ENCODE measurements at regions of chr4 and their contacts with region 1.

Region 1: GRCh38 chr4:174631901-174632758 is 109.8 kb upstream of the HPGD start:
- DNase-seq: peak in 2 of 7 donors; percentile 8 to 27
- H3K4me3 ChIP-seq: no peak overlapping the region
- H3K27ac ChIP-seq: no peak overlapping the region
- H3K4me1 ChIP-seq: no peaks in the 10 kb centered on the region
- H3K27me3 ChIP-seq: no peaks in the 10 kb centered on the region
- CTCF ChIP-seq: peak; percentile 42 to 82 (median 62)
- POLR2A ChIP-seq: no peak

Region 2: DNA sequence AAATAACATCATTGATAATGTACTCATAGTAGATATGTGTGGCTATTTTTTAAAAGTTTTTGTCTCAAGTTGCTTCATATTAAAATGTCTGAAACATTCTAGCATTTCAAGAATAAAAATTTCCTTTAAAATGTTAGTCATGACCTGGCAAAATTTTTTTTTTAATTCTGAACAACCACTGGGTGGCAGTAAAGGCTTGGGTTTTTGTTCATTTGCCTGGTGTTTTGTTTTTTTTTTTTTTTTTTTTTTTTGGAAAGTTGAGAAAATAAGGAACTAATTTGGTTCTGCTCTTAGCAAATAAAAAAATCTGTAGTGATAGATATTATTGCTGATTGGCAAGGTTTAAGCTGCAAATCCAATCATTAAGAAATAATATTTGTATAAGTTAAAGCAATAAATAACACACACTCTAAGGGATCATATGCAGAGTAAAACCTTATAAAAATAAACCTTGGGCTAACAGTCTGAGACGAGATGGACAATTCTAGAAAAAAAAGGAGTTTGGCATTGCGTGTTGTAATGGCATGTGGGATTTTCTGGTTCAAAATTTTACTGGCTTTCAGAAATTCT is 267.0 kb before region 1 on chr4:
- intact Hi-C with region 1: loop called (anchors 5 to 10 kb)
- DNase-seq: peak in 4 of 7 donors; percentile 22 to 37 (median 26)
- H3K4me3 ChIP-seq: no peak overlapping the region
- H3K27ac ChIP-seq: no peak overlapping the region
- H3K4me1 ChIP-seq: no peaks in the 10 kb centered on the region
- H3K27me3 ChIP-seq: no peaks in the 10 kb centered on the region
- CTCF ChIP-seq: peak; percentile 30 to 70 (median 54)
- POLR2A ChIP-seq: no peak

Region 3: GRCh38 chr4:174377613-174378012 is 254.5 kb before region 1 on chr4:
- intact Hi-C with region 1: loop called in 1 of 2 experiments (anchors 10 kb)
- DNase-seq: no peak
- H3K4me3 ChIP-seq: no peak overlapping the region
- H3K27ac ChIP-seq: no peak overlapping the region
- H3K4me1 ChIP-seq: no peaks in the 10 kb centered on the region
- H3K27me3 ChIP-seq: no peaks in the 10 kb centered on the region
- CTCF ChIP-seq: no peak
- POLR2A ChIP-seq: no peak

Region 4: DNA sequence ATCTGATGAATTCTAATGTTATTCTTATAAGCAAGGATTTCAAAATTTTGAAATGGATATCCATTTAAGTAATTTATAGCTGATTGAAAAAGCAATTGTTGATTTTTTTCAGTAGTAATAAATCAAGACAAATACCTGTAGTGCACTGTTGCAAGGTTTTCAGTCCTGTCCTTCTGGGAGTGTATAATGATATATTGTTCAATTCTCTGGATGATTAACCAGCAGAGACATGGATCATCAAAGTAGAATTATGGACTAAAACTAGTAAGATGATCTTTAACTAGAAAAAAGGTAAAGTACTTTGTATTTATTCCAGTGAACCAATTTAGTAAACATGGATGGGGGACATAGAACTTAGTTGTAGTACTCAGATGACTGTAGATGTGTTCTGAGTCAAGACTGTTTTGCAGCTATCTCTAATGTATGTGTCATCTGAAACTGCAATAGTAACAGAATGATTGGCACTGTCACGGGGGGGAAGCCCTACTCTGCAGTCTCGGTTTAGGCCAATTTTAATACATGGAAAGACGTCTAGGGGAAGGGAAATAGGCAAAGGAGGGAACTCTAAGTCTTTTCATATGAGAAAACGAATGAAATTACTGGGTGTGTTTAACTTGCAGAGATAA is 75.0 kb after region 1 on chr4:
- intact Hi-C with region 1: no loop called
- DNase-seq: no peak
- H3K4me3 ChIP-seq: no peak overlapping the region
- H3K27ac ChIP-seq: no peak overlapping the region
- H3K4me1 ChIP-seq: no peaks in the 10 kb centered on the region
- H3K27me3 ChIP-seq: no peaks in the 10 kb centered on the region
- CTCF ChIP-seq: no peak
- POLR2A ChIP-seq: no peak